ENCODE measurements at regions of chr2 and their contacts with region 1.

Region 1: DNA sequence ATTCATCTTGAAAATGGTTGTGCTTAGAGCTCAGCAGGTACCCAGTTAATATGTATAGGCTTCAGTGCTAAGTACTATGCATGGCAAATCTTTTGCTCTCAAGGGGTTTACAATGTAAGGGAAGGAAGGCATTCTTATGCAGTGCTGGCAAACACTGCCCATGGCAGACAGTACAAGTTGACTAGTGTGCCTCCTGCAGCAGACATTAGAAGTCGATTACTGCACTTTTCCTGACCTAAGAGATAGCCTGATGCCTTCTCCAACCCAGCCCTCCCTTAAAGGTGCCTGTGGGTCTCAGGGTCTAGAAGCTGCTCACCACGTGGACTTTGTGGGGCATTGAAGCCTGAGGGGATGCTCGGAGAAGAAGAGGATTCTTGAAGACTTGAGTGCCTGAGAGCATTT is 50.9 kb downstream of the GLI2 start:
- DNase-seq: peak; percentile 85
- H3K4me3 ChIP-seq: no peak overlapping the region
- H3K27ac ChIP-seq: no peak overlapping the region
- H3K4me1 ChIP-seq: peaks cover 37% of the 10 kb centered on the region
- H3K27me3 ChIP-seq: no peaks in the 10 kb centered on the region
- CTCF ChIP-seq: no peak

Region 2: GRCh38 chr2:120012771-120013596 is 773.6 kb before region 1 on chr2 and contains the start of gene EPB41L5:
- CTCF ChIA-PET with region 1: interaction called, 12 read pairs
- POLR2A ChIA-PET with region 1: no interaction called
- intact Hi-C with region 1: no loop called
- DNase-seq: peak; percentile 98
- H3K4me3 ChIP-seq: peak within 1 kb of the TSS; percentile 74
- H3K27ac ChIP-seq: peak within 1 kb of the TSS; percentile 91
- H3K4me1 ChIP-seq: peaks cover 7% of the 10 kb centered on the region
- H3K27me3 ChIP-seq: no peaks in the 10 kb centered on the region
- CTCF ChIP-seq: no peak
- total RNA-seq, gene EPB41L5: 25.8 and 26.5 TPM in 2 replicates

Region 3: GRCh38 chr2:120934574-120935340 is 148.2 kb after region 1 on chr2:
- CTCF ChIA-PET with region 1: no interaction called
- POLR2A ChIA-PET with region 1: no interaction called
- intact Hi-C with region 1: no loop called
- DNase-seq: peak; percentile 48
- H3K4me3 ChIP-seq: no peak overlapping the region
- H3K27ac ChIP-seq: no peak overlapping the region
- H3K4me1 ChIP-seq: peaks cover 12% of the 10 kb centered on the region
- H3K27me3 ChIP-seq: no peaks in the 10 kb centered on the region
- CTCF ChIP-seq: no peak

Measured in A673 (cell line).